ENCODE measurements at regions of chr4 and their contacts with region 1.

Region 1: DNA sequence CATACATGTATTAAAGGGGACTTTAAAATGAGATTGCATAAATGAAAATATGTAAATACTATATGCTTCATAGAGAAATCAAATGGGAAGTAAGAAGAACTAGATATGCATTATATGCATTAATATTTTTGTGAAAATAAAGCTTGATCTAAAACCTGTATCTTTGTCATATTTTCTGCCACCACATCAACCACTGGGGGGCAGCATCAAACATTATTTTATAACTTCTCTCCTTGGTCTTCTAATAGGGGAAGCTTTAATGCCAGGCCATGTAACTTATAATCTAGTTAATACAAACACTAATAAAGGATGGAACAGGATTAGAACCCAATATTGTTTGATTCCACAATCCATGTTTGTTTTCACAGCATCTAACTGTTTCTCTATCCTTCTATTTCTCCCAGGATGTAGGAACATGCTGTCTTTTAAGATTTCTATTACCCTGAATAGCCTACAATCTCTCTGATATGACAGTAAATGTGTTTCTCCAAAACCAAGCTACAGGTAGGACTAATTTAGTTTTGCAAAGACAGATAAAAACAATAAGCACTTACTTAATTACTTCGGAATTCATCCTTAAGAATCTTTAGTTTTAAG is 10.0 kb downstream of the QRFPR start:
- DNase-seq: peak; percentile 68
- H3K4me3 Mint-ChIP-seq: no peak overlapping the region
- H3K27ac Mint-ChIP-seq: no peak overlapping the region
- H3K4me1 Mint-ChIP-seq: peaks cover 26% of the 10 kb centered on the region
- H3K27me3 Mint-ChIP-seq: no peaks in the 10 kb centered on the region
- CTCF ChIP-seq: peak; percentile 46

Region 2: GRCh38 chr4:121358473-121358872 is 12.4 kb before region 1 on chr4:
- CTCF ChIA-PET with region 1: interaction called, 24 read pairs
- POLR2A ChIA-PET with region 1: interaction called, 30 read pairs
- intact Hi-C with region 1: no loop called
- DNase-seq: peak; percentile 77
- H3K4me3 Mint-ChIP-seq: no peak overlapping the region
- H3K27ac Mint-ChIP-seq: peak overlapping the region; percentile 95
- H3K4me1 Mint-ChIP-seq: peaks cover 29% of the 10 kb centered on the region
- H3K27me3 Mint-ChIP-seq: no peaks in the 10 kb centered on the region
- CTCF ChIP-seq: no peak

Region 3: GRCh38 chr4:121421594-121421993 is 50.8 kb after region 1 on chr4:
- CTCF ChIA-PET with region 1: interaction called, 77 read pairs
- POLR2A ChIA-PET with region 1: interaction called, 4 read pairs
- intact Hi-C with region 1: loop called (anchors 1 kb)
- DNase-seq: peak; percentile 59
- H3K4me3 Mint-ChIP-seq: no peak overlapping the region
- H3K27ac Mint-ChIP-seq: peak overlapping the region; percentile 8
- H3K4me1 Mint-ChIP-seq: peaks cover 7% of the 10 kb centered on the region
- H3K27me3 Mint-ChIP-seq: no peaks in the 10 kb centered on the region
- CTCF ChIP-seq: peak; percentile 67

Region 4: DNA sequence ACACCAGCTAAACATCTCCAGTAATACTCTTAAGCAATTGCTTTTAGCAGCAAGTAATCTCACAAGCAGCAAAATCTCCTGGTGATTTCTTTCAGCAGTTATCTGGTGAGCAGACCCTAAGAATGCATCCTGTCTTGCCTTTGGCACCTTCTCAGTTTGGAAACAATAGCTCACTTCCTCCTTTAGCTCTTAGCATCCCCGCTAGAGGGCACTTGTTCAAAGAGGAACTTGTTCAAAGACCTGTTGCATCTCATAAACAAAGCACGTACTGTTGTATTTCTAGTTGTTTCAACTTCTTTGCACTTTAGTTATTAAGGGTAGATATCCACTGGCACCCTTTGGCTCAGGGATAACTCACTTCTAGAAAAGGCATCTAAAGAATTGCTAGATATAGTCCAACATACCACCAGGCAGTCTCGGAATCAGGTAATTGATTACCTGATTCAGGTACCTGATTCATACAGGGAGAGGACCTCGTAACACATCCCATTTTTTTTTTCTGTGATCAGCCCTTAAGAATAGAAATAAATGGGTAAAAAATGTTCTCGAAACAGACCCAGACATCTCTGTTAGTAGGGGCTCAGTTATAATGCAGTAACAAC is 91.9 kb after region 1 on chr4:
- CTCF ChIA-PET with region 1: interaction called, 23 read pairs
- POLR2A ChIA-PET with region 1: interaction called, 6 read pairs
- intact Hi-C with region 1: loop called (anchors 1 kb)
- DNase-seq: peak; percentile 85
- H3K4me3 Mint-ChIP-seq: no peak overlapping the region
- H3K27ac Mint-ChIP-seq: no peak overlapping the region
- H3K4me1 Mint-ChIP-seq: no peaks in the 10 kb centered on the region
- H3K27me3 Mint-ChIP-seq: no peaks in the 10 kb centered on the region
- CTCF ChIP-seq: peak; percentile 63